Heart left ventricle (tissue), 16 donors: ENCODE measurements at regions of chr14 and their contacts with region 1.

Region 1: GRCh38 chr14:23406244-23406643 is 1.8 kb downstream of the MYH6 start:
- DNase-seq: peak in 2 of 5 donors; percentile 28 to 29
- ATAC-seq: no peak
- H3K4me3 ChIP-seq: peak overlapping the region in 3 of 12 donors; percentile 38 to 45 (median 41)
- H3K27ac ChIP-seq: peak overlapping the region in 10 of 12 donors; percentile 2 to 91 (median 75)
- H3K4me1 ChIP-seq: peaks cover 0 to 44% (median 3%) of the 10 kb centered on the region in 12 donors
- H3K27me3 ChIP-seq: peaks cover 0 to 10% (median 0%) of the 10 kb centered on the region in 9 donors
- CTCF ChIP-seq: no peak
- POLR2A ChIP-seq: no peak

Region 2: DNA sequence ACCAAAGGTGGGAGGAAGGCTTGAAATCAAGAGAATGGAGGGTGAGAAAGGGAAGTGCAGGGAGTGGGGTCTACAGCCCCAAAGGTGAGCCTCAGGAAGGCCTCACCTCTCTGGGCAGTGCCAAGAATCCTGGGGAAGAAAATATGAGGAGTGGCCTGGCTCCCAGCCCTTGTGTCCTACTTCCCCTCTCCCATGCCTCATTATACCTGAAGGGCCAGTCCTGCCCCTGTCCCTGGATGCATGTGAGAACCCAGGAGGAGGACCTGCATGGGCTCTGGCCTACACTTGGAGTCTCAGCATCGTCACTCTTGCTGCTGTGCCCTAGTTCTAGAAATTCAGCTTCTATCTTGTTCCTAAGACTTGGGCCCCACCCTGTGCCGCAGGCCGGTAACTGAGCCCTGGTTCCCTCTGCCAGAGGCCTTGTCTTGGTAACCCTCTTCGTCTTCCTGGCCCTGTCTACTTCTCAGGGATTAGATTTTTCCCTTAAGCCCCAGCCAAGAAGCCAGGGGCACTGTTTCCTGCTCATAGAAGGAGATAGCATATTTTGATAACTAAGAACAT is 40.1 kb after region 1 on chr14:
- intact Hi-C with region 1: loop called in 3 of 10 experiments (anchors 2 to 5 kb)
- DNase-seq: no peak
- ATAC-seq: peak; percentile 10 to 47 (median 30)
- H3K4me3 ChIP-seq: no peak overlapping the region
- H3K27ac ChIP-seq: peak overlapping the region in 8 of 12 donors; percentile 6 to 97 (median 72)
- H3K4me1 ChIP-seq: peaks cover 0 to 41% (median 15%) of the 10 kb centered on the region in 12 donors
- H3K27me3 ChIP-seq: peaks cover 0 to 6% (median 0%) of the 10 kb centered on the region in 9 donors
- CTCF ChIP-seq: peak in 7 of 12 donors; percentile 21 to 51 (median 38)
- POLR2A ChIP-seq: no peak